MCF 10A (cell line): ENCODE measurements at regions of chr3 and their contacts with region 1.

Region 1: DNA sequence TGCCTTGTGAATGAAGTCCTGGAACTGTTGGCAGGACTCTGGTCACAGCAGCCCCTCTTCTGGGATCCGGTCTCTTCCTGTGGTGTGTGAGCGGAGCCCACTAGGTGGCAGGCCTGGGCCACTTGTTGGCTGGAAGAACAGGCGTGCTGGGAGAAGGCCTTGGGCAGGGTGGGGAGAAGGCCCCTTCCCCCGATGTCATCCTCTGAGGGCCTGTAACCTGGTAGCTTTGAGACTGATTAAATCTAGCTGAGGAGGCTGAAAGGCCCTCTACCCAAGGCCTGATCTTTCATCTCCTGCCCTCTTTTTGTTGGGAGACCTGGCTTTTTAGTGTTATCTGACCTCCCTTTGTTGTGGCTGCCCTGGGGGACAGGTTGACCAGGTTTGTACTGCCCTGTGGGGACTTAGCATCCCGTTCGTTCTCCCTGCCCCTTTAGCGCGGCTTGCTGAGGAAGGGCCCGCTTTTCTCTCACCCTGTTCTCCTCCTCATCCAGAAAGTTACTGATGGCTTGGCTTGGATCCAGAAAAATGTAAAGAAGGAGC is 48.3 kb downstream of the CHCHD6 start:
- DNase-seq: peak; percentile 81
- H3K4me3 Mint-ChIP-seq: no peak overlapping the region
- H3K27ac Mint-ChIP-seq: peak overlapping the region; percentile 76
- H3K4me1 Mint-ChIP-seq: peaks cover 39% of the 10 kb centered on the region
- H3K27me3 Mint-ChIP-seq: no peaks in the 10 kb centered on the region
- CTCF ChIP-seq: peak; percentile 84

Region 2: DNA sequence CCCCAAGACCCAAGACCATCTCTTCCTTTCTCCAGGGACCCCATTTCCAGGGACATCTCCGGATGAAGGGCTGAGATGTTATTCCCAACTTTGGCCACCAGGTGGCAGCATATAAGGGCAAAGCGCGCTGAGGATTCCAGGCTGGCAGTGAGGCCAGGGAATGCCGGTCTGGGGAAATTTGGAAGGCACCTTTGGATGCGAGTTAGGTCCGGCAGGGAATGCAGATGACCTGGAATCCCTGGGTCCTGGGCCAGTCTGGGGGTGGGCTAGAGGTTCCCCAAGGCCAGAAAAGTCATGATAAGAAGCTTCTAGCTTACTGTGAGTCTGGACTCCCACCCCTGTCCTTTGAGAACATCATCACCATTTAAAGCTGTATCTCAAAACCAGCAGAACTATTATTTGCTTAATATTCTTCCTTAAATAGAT is 230.0 kb before region 1 on chr3:
- CTCF ChIA-PET with region 1: interaction called, 4 read pairs
- POLR2A ChIA-PET with region 1: no interaction called
- intact Hi-C with region 1: loop called (anchors 5 kb)
- DNase-seq: peak; percentile 65
- H3K4me3 Mint-ChIP-seq: no peak overlapping the region
- H3K27ac Mint-ChIP-seq: no peak overlapping the region
- H3K4me1 Mint-ChIP-seq: no peaks in the 10 kb centered on the region
- H3K27me3 Mint-ChIP-seq: no peaks in the 10 kb centered on the region
- CTCF ChIP-seq: peak; percentile 90

Region 3: DNA sequence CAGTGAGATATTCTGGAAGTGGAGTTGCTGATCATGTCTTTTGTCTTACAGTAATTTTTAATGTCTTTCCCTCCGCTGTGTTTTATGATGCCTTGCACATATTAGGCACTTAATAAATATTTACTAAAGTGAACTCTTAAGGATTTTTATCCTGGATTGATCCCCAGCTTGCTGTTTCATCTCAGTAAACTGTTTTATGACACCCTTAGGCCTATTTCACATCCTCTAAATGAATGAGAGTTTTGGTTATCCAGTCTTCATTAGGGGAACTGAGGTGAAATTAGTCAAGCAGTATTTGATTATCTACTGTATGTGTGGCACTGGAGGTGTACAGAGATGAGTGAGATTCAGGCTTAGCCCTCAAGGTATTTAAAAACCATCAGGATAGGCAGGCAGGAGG is 28.6 kb before region 1 on chr3:
- CTCF ChIA-PET with region 1: no interaction called
- POLR2A ChIA-PET with region 1: no interaction called
- intact Hi-C with region 1: no loop called
- DNase-seq: no peak
- H3K4me3 Mint-ChIP-seq: no peak overlapping the region
- H3K27ac Mint-ChIP-seq: no peak overlapping the region
- H3K4me1 Mint-ChIP-seq: no peaks in the 10 kb centered on the region
- H3K27me3 Mint-ChIP-seq: no peaks in the 10 kb centered on the region
- CTCF ChIP-seq: no peak

Region 4: DNA sequence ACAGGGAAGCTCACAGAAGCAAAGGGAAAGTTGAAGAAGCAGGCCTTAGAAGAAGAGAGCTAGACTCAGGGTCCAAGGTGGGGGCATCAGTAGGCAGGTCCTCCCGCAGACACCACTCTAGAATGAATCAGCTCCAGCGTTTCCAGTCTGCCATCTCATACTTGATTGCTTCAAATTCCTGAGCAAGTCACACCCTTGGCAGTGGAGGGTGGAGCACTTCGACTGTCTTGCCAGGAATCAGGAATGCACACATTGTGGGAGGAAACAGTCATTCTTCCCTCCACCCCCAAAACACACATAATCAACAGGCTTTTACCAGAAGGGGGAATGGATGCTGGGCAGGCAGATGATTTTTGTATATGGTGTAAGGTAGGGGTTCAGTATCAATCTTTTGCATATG is 30.2 kb after region 1 on chr3:
- CTCF ChIA-PET with region 1: interaction called, 13 read pairs
- POLR2A ChIA-PET with region 1: interaction called, 33 read pairs
- intact Hi-C with region 1: loop called (anchors 1 kb)
- DNase-seq: peak; percentile 94
- H3K4me3 Mint-ChIP-seq: peak overlapping the region; percentile 48
- H3K27ac Mint-ChIP-seq: peak overlapping the region; percentile 97
- H3K4me1 Mint-ChIP-seq: peaks cover 51% of the 10 kb centered on the region
- H3K27me3 Mint-ChIP-seq: no peaks in the 10 kb centered on the region
- CTCF ChIP-seq: no peak

Region 5: GRCh38 chr3:126895178-126896066 is 143.0 kb after region 1 on chr3:
- CTCF ChIA-PET with region 1: interaction called, 26 read pairs
- POLR2A ChIA-PET with region 1: interaction called, 5 read pairs
- intact Hi-C with region 1: no loop called
- DNase-seq: peak; percentile 97
- H3K4me3 Mint-ChIP-seq: no peak overlapping the region
- H3K27ac Mint-ChIP-seq: no peak overlapping the region
- H3K4me1 Mint-ChIP-seq: peaks cover 48% of the 10 kb centered on the region
- H3K27me3 Mint-ChIP-seq: no peaks in the 10 kb centered on the region
- CTCF ChIP-seq: no peak

Region 6: DNA sequence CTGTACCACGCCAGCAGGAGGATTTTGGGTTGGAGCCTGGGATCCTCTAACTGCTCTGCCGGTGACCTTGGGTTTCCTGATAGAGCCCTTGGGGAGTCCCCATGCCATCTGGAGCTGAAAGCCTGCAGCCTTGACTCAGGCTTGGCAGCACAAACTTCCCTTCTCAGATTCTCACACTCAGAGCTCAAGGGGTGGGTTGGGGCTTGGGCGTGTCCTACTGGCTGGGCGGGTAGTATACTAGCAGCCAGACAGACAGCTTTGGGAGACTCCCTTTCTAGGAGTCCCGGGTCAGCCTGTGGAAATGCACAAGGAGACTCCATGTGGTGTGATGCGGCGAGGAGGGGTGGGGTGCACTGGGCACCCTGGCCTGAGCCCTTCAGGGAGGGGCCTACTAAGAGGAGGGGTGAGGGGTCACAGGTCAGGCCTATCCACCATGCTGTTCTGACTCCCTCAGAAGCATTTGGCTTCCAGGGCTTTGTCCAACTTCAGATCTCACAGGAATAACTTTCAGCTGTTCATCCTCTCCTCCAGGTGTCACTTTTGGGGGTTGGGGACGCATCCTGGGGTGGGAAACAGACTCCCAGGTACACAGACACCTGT is 208.9 kb after region 1 on chr3:
- CTCF ChIA-PET with region 1: interaction called, 48 read pairs
- POLR2A ChIA-PET with region 1: interaction called, 4 read pairs
- intact Hi-C with region 1: loop called (anchors 1 kb)
- DNase-seq: peak; percentile 88
- H3K4me3 Mint-ChIP-seq: no peak overlapping the region
- H3K27ac Mint-ChIP-seq: peak overlapping the region; percentile 55
- H3K4me1 Mint-ChIP-seq: peaks cover 22% of the 10 kb centered on the region
- H3K27me3 Mint-ChIP-seq: no peaks in the 10 kb centered on the region
- CTCF ChIP-seq: no peak

Region 7: GRCh38 chr3:127002195-127003174 is 250.1 kb after region 1 on chr3:
- CTCF ChIA-PET with region 1: interaction called, 11 read pairs
- POLR2A ChIA-PET with region 1: no interaction called
- intact Hi-C with region 1: loop called (anchors 1 kb)
- DNase-seq: peak; percentile 75
- H3K4me3 Mint-ChIP-seq: peak overlapping the region; percentile 65
- H3K27ac Mint-ChIP-seq: peak overlapping the region; percentile 94
- H3K4me1 Mint-ChIP-seq: peaks cover 27% of the 10 kb centered on the region
- H3K27me3 Mint-ChIP-seq: no peaks in the 10 kb centered on the region
- CTCF ChIP-seq: no peak

Region 8: DNA sequence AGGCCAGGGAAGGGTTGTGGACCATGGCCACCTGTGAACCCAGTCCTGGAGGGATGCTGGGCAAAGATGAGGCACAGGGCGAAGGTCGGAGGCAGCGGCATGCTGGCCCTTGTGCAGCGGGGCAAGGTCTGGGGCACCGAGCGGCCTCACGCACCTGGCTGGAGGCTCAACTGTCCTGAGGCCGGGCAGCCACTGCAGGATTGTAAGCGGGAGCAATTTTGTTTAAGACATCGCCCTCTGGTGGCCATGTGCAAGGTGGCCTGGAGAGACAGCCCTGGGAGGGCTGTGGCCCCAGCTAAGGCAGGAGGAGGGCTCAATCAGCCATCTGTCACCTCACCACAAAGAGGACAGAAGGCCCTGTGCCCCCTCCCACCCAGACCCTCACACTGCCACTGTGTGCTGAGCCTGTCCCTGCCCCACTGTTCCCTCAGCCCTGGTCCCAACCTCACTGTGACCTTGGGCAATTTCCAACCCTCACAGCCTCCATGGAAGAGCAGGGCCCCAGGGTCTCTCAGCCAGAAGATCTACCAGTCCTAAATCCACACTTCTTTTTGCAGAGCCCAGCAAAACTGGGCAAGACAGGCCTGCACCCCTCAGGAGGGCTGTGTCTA is 791.9 kb after region 1 on chr3:
- CTCF ChIA-PET with region 1: interaction called, 34 read pairs
- POLR2A ChIA-PET with region 1: no interaction called
- intact Hi-C with region 1: loop called (anchors 1 kb)
- DNase-seq: peak; percentile 80
- H3K4me3 Mint-ChIP-seq: no peak overlapping the region
- H3K27ac Mint-ChIP-seq: no peak overlapping the region
- H3K4me1 Mint-ChIP-seq: peaks cover 6% of the 10 kb centered on the region
- H3K27me3 Mint-ChIP-seq: peaks cover 17% of the 10 kb centered on the region
- CTCF ChIP-seq: peak; percentile 84